Body of pancreas (tissue), 4 donors: ENCODE measurements at regions of chr14 and their contacts with region 1.

Region 1: DNA sequence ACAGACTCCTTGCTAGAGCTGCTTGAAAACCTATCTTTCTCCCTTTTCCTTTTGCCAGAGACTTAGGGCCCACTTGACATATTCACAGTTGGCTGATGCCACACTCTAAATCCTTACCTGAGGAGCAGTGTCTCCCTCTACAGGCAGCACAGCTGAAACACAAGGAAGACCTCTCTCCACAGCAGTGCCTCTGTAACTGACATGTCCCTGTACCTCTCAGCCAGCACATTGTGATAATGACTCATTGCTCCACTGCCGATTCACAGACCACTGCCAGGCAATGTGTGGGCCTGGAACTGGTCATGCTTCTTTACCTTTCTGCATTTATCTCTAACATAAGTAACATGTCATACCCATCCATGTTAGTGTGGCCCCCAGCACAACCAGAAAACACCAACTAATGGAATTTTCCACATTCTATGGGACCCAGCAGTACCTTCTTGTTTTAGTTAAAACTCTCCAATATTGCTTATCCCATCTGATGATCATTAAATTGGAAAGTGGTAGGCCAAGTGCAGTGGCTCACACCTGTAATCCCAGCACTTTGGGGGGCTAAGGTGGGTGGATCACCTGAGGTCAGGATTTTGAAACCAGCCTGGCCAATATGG is 56.5 kb downstream of the GTF2A1 start:
- DNase-seq: peak; percentile 65 to 80 (median 74)
- ATAC-seq: peak; percentile 85
- H3K4me3 ChIP-seq: no peak overlapping the region
- H3K27ac ChIP-seq: no peak overlapping the region
- H3K4me1 ChIP-seq: peaks cover 9% of the 10 kb centered on the region
- H3K27me3 ChIP-seq: no peaks in the 10 kb centered on the region
- CTCF ChIP-seq: peak in 6 of 7 experiments; percentile 34 to 73 (median 62)
- POLR2A ChIP-seq: no peak

Region 2: DNA sequence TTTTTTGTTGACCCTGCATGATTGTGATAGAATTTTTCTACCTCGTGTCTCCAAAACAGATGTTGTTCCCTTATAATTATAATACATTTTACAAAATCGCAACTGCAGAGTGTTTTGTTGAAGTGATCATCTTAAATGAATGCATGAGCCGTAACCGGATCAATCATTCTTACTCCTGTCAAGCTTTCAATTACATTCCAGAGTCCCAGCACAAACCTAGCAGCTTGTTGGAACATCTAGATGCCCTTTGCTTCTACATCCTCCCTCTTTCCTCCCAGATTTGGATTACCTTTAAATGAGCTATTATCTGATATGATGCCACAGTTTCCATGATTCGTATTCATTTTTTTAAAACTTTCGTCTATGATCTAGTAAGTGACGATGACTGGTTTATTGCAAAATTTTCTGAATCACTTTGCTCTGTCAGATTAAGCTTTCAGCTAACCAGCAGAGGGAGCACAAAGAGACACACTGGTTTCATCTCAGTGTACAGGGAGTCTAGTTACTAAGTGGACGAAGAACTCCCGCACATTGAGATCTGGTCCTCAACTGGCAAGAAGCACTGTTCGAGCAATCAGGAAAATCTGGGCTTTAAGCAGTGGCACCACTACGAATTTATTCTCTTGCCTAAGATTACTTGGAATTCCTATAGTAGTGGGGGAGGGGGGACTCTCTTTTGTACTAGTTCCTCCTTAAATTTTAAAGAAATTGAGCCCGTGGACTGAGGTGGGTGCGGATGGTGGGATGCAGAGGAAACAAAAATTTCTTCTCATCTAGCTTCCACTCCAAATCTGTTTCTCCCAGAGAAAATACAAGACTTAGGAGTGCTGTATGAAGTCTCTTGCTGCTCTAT is 168.0 kb before region 1 on chr14:
- intact Hi-C with region 1: loop called (anchors 10 kb)
- DNase-seq: peak; percentile 23 to 67 (median 38)
- ATAC-seq: peak; percentile 89
- H3K4me3 ChIP-seq: no peak overlapping the region
- H3K27ac ChIP-seq: no peak overlapping the region
- H3K4me1 ChIP-seq: no peaks in the 10 kb centered on the region
- H3K27me3 ChIP-seq: no peaks in the 10 kb centered on the region
- CTCF ChIP-seq: peak; percentile 39 to 83 (median 75)
- POLR2A ChIP-seq: peak in 1 of 3 donors; percentile 4

Region 3: GRCh38 chr14:81594012-81594411 is 429.7 kb after region 1 on chr14:
- intact Hi-C with region 1: no loop called
- DNase-seq: peak; percentile 85 to 92 (median 91)
- ATAC-seq: peak; percentile 100
- H3K4me3 ChIP-seq: no peak overlapping the region
- H3K27ac ChIP-seq: peak overlapping the region in 3 of 4 donors; percentile 64 to 80 (median 67)
- H3K4me1 ChIP-seq: peaks cover 33% of the 10 kb centered on the region
- H3K27me3 ChIP-seq: no peaks in the 10 kb centered on the region
- CTCF ChIP-seq: no peak
- POLR2A ChIP-seq: no peak